Common myeloid progenitor, CD34-positive (primary cell): ENCODE measurements at regions of chr2 and their contacts with region 1.

Region 1: GRCh38 chr2:127649684-127650040 is 3.7 kb downstream of the GPR17 start:
- DNase-seq: peak; percentile 78 to 82 (median 79)
- H3K4me3 ChIP-seq: peak overlapping the region in 1 of 7 experiments; percentile 26
- H3K27ac ChIP-seq: no peak overlapping the region
- H3K4me1 ChIP-seq: peaks cover 0 to 42% (median 29%) of the 10 kb centered on the region in 4 experiments
- H3K27me3 ChIP-seq: no peaks in the 10 kb centered on the region

Region 2: GRCh38 chr2:127664065-127664894 is 14.6 kb after region 1 on chr2:
- CTCF ChIA-PET with region 1: interaction called, 12 read pairs
- POLR2A ChIA-PET with region 1: no interaction called
- DNase-seq: peak in 2 of 3 donors; percentile 7 to 16
- H3K4me3 ChIP-seq: peak overlapping the region in 3 of 7 experiments; percentile 15 to 60 (median 46)
- H3K27ac ChIP-seq: no peak overlapping the region
- H3K4me1 ChIP-seq: peaks cover 0 to 12% (median 10%) of the 10 kb centered on the region in 4 experiments
- H3K27me3 ChIP-seq: peaks cover 8 to 55% (median 22%) of the 10 kb centered on the region in 5 experiments

Region 3: GRCh38 chr2:127770973-127771735 is 121.5 kb after region 1 on chr2:
- CTCF ChIA-PET with region 1: no interaction called
- POLR2A ChIA-PET with region 1: no interaction called
- DNase-seq: peak in 2 of 3 donors; percentile 13 to 22
- H3K4me3 ChIP-seq: no peak overlapping the region
- H3K27ac ChIP-seq: no peak overlapping the region
- H3K4me1 ChIP-seq: peaks cover 0 to 3% (median 0%) of the 10 kb centered on the region in 4 experiments
- H3K27me3 ChIP-seq: no peaks in the 10 kb centered on the region